ENCODE measurements at regions of chr12 and their contacts with region 1.

Region 1: DNA sequence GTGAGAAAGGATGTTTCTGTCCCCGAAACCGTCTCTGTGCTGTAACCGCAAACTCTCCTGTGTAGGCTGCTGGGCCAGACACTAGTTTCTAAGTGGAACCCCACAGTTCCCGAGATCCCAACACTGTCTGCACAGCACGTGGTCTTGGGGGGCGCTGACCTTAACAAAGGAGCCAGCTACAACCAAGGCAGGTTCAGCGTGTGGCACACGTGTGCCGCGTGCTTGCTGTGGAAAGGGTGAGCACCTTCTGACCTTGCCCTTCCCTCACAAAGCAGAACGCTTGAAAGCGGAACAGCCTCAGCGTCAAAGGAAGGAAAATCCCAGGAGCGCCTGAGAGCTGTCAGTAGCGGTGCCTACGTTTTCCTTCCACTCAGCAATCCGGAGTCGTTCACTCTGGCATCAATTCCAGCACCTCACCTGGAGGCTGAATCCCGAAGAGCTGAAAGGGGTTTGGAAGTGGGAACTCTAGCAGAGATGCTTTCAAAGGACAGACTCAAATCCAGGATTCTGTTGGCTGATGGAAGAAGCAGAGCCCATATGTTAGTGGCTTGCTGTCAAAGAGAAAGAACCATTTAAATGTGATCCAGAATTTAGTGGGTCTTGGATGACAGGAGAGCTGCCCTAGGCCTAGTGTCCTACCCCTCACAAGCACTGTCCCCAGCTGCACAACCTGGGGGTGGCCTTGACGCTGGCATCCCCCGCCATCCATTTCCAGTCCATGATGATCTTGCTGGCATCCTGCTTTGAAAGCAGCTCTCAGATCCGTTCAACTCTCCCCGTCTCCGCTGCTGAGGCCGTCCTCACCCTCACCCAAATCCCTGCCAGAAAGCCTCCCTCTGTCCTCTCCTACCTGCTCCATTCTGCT is 27.1 kb downstream of the CCDC92 start:
- DNase-seq: no peak
- H3K4me3 ChIP-seq: no peak overlapping the region
- H3K27ac ChIP-seq: no peak overlapping the region
- H3K4me1 ChIP-seq: peaks cover 0 to 14% (median 7%) of the 10 kb centered on the region in 4 donors
- H3K27me3 ChIP-seq: no peaks in the 10 kb centered on the region
- CTCF ChIP-seq: no peak

Region 2: GRCh38 chr12:123931686-123932321 is 13.7 kb before region 1 on chr12:
- intact Hi-C with region 1: loop called (anchors 1 kb)
- DNase-seq: no peak
- H3K4me3 ChIP-seq: no peak overlapping the region
- H3K27ac ChIP-seq: no peak overlapping the region
- H3K4me1 ChIP-seq: no peaks in the 10 kb centered on the region
- H3K27me3 ChIP-seq: no peaks in the 10 kb centered on the region
- CTCF ChIP-seq: no peak

Measured in tibial artery (tissue), 4 donors.